Naive thymus-derived CD4-positive, alpha-beta T cell (primary cell): ENCODE measurements at regions of chr7 and their contacts with region 1.

Region 1: DNA sequence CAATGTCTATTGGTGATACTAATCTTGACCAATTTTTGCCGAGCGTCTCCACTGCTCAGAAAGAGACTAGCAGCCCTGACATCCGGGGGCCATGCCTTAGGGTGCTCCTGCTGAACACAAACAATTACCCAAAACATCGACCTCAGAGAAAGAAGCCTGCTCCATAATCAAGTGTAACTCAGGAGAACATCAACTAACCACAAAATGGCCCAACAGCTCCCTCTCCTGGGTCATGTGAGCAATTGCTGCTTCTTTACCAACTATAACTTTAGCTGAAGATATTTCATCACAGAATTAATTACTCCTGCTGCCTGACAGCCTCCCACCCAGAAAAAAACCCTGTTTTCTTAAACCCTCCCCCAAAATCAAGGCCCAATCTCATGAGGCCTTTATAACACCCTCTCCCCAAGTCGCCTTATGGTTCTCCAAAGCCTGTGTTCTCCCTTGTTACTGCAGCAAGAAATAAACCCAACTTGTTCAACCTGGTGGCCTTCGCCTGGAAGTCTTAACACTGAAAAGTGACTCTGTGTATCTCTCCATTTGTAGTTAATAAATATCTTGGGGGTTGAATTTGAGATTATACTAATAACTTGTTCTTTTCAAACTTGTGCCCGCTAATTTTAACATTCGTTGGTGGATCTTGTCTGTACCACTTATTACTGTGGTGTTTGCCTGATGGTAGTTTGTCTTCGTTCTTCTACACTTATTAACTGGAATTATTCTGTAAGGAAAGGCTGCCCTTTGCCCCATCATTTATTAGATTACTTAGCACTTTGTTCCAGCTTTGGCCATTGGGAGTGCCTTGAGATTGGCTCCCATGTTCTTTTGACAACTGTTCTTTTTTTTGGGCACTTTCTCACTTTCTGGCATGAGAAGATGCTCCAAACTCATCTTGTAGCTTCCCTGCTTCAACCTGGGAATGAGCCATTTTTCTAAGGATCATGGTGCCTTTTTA is 21.2 kb upstream of the RAMP3 start:
- DNase-seq: peak; percentile 38 to 81 (median 70)
- ATAC-seq: peak; percentile 91
- H3K4me3 ChIP-seq: no peak overlapping the region
- H3K4me3 Mint-ChIP-seq: peak overlapping the region in 1 of 10 donors; percentile 21
- H3K27ac ChIP-seq: no peak overlapping the region
- H3K27ac Mint-ChIP-seq: peak overlapping the region in 8 of 9 donors; percentile 0 to 84 (median 48)
- H3K4me1 ChIP-seq: peaks cover 0 to 3% of the 10 kb centered on the region in 2 donors
- H3K4me1 Mint-ChIP-seq: peaks cover 6 to 27% (median 10%) of the 10 kb centered on the region in 7 donors
- H3K27me3 ChIP-seq: no peaks in the 10 kb centered on the region
- H3K27me3 Mint-ChIP-seq: peaks cover 0 to 2% (median 0%) of the 10 kb centered on the region in 5 donors

Region 2: GRCh38 chr7:44581879-44582603 is 554.3 kb before region 1 on chr7 and contains the start of gene TMED4:
- CTCF ChIA-PET with region 1: no interaction called
- POLR2A ChIA-PET with region 1: no interaction called
- intact Hi-C with region 1: loop called in 1 of 2 experiments (anchors 2 kb)
- DNase-seq: peak; percentile 100
- ATAC-seq: peak; percentile 96
- H3K4me3 ChIP-seq: peak within 1 kb of the TSS; percentile 95
- H3K4me3 Mint-ChIP-seq: peak within 1 kb of the TSS; percentile 86 to 97 (median 92)
- H3K27ac ChIP-seq: peak within 1 kb of the TSS; percentile 90
- H3K27ac Mint-ChIP-seq: peak within 1 kb of the TSS; percentile 95 to 99 (median 98)
- H3K4me1 ChIP-seq: peaks cover 14 to 19% of the 10 kb centered on the region in 2 donors
- H3K4me1 Mint-ChIP-seq: peaks cover 13 to 43% (median 38%) of the 10 kb centered on the region in 7 donors
- H3K27me3 ChIP-seq: no peaks in the 10 kb centered on the region
- H3K27me3 Mint-ChIP-seq: peaks cover 0 to 12% (median 0%) of the 10 kb centered on the region in 5 donors
- total RNA-seq, gene TMED4: 70.0 to 98.5 (median 95.3) TPM

Region 3: GRCh38 chr7:44921607-44922359 is 214.6 kb before region 1 on chr7:
- CTCF ChIA-PET with region 1: interaction called, 4 read pairs
- POLR2A ChIA-PET with region 1: no interaction called
- intact Hi-C with region 1: loop called (anchors 1 to 5 kb)
- DNase-seq: peak; percentile 76 to 98 (median 86)
- ATAC-seq: peak; percentile 99
- H3K4me3 ChIP-seq: no peak overlapping the region
- H3K4me3 Mint-ChIP-seq: no peak overlapping the region
- H3K27ac ChIP-seq: no peak overlapping the region
- H3K27ac Mint-ChIP-seq: peak overlapping the region in 5 of 9 donors; percentile 6 to 78 (median 34)
- H3K4me1 ChIP-seq: peaks cover 0 to 9% of the 10 kb centered on the region in 2 donors
- H3K4me1 Mint-ChIP-seq: peaks cover 0 to 21% (median 0%) of the 10 kb centered on the region in 7 donors
- H3K27me3 ChIP-seq: no peaks in the 10 kb centered on the region
- H3K27me3 Mint-ChIP-seq: peaks cover 0 to 6% (median 0%) of the 10 kb centered on the region in 5 donors

Region 4: DNA sequence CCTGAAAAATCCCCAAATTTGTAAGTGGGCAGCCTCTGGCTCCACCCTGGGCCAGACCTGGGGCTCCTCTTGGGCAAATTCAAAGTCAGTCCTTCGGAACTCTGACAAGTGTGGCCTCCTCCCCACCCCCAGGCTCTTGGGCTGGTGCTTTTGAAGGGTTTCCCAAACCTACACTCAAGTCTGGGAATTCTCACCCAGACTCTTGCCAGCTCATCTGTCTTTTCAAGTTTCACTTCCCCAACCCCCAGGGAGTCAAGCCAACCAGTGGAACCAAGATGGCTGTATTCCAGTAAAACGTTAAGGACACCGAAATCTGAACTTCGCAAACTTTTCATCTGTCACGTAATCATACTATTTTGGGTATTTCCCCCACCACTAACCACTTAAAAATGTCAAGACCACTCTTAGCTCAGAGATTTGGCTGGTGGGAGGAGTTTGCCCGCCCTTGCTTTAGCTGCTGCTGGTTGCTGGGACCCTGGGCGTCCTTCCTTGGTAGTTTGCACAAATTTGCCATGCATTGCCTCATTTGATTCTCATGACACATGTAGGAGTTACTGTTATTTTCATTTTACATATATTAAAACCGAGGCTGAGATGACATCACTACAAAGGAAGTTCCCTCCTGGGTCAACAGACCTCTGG is 155.9 kb before region 1 on chr7:
- CTCF ChIA-PET with region 1: interaction called, 139 read pairs
- POLR2A ChIA-PET with region 1: interaction called, 4 read pairs
- intact Hi-C with region 1: loop called in 1 of 2 experiments (anchors 1 kb)
- DNase-seq: peak in 2 of 9 donors; percentile 63 to 69
- ATAC-seq: peak; percentile 38
- H3K4me3 ChIP-seq: peak overlapping the region; percentile 78
- H3K4me3 Mint-ChIP-seq: peak overlapping the region; percentile 39 to 100 (median 70)
- H3K27ac ChIP-seq: peak overlapping the region; percentile 83
- H3K27ac Mint-ChIP-seq: peak overlapping the region; percentile 85 to 99 (median 96)
- H3K4me1 ChIP-seq: peaks cover 60 to 63% of the 10 kb centered on the region in 2 donors
- H3K4me1 Mint-ChIP-seq: peaks cover 54 to 96% (median 68%) of the 10 kb centered on the region in 7 donors
- H3K27me3 ChIP-seq: no peaks in the 10 kb centered on the region
- H3K27me3 Mint-ChIP-seq: no peaks in the 10 kb centered on the region

Region 5: DNA sequence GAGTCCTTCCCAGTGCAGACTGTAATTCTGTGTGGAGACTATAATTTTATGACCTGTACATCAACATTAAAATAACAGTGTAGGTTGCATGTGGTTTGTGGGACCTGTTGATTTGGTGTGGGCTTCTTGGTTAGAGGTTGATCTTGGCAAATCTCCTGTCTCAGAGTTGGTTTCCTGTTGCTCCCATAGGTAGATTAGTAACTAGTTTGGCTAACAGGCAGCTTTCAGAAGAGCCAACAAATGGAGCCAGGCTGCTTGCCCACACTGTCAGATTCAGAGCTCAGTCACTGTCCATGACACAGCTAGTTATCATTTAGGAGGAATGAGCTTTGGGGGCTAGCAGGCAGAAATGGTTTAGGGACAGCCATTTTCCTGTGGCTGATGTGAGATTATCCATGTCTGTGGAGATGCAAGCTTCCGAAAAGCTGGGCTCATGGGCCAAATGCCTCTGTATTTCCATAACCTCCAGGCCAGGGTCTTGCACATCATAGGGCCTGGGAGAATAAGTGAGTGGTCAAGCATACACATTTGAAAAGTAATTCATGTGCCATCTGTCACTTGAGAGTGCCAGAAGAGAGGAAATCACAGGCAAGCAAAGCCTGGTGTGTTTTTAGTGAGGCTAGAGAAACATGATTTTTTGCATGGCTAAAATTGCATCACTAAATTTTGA is 103.0 kb before region 1 on chr7:
- CTCF ChIA-PET with region 1: no interaction called
- POLR2A ChIA-PET with region 1: interaction called, 3 read pairs
- intact Hi-C with region 1: loop called (anchors 1 to 5 kb)
- DNase-seq: no peak
- ATAC-seq: peak; percentile 12
- H3K4me3 ChIP-seq: peak overlapping the region; percentile 15
- H3K4me3 Mint-ChIP-seq: peak overlapping the region; percentile 76 to 93 (median 81)
- H3K27ac ChIP-seq: peak overlapping the region; percentile 43
- H3K27ac Mint-ChIP-seq: peak overlapping the region; percentile 48 to 94 (median 84)
- H3K4me1 ChIP-seq: peaks cover 67 to 81% of the 10 kb centered on the region in 2 donors
- H3K4me1 Mint-ChIP-seq: peaks cover 61 to 80% (median 75%) of the 10 kb centered on the region in 7 donors
- H3K27me3 ChIP-seq: no peaks in the 10 kb centered on the region
- H3K27me3 Mint-ChIP-seq: no peaks in the 10 kb centered on the region

Region 6: DNA sequence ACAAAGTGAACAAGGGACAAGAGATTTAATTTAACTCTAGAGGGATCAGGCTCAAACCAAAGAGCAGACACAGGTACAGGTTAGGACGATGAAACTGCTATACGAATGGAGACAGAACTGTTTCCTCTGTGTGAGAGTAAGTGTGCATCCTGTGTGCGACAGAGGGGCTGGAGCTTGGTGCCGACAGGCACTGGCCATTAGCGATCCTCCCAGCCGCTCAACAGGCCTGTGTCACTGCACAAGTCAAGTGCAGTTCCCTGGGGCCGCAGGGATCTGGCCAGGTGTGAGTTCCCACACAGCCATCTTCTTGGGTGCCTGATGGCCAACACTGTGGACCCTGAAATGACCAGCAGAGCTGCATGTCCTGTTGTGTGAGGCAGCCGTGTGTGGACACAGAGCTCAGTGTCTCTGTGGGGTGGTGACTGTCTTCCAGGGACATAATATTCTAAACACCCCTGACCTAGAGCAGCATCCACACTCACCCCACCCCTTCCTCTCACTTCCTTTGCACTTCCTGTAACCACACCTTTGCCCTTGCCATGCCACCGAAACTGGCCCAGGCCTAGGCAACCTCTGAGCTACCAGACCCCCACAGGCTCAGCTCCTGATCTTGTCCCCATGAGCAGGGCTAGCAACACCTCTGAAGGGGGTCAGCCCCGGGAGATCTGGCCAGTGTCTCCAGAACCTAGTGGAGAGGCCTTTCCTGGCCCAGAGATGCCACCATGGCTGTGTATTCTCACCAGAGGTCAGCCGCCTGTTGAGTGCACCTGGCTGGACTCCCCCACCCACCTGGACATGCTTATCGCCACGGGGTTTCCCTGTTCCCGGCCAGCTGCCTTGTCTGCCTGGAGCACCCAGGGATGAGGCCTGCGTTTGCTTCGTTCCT is 13.2 kb before region 1 on chr7:
- CTCF ChIA-PET with region 1: interaction called, 13 read pairs
- POLR2A ChIA-PET with region 1: no interaction called
- intact Hi-C with region 1: no loop called
- DNase-seq: peak in 1 of 9 donors; percentile 7
- ATAC-seq: peak; percentile 36
- H3K4me3 ChIP-seq: peak overlapping the region; percentile 28
- H3K4me3 Mint-ChIP-seq: peak overlapping the region in 9 of 10 donors; percentile 32 to 84 (median 65)
- H3K27ac ChIP-seq: peak overlapping the region; percentile 28
- H3K27ac Mint-ChIP-seq: peak overlapping the region; percentile 14 to 95 (median 75)
- H3K4me1 ChIP-seq: peaks cover 14 to 17% of the 10 kb centered on the region in 2 donors
- H3K4me1 Mint-ChIP-seq: peaks cover 8 to 20% (median 16%) of the 10 kb centered on the region in 7 donors
- H3K27me3 ChIP-seq: peaks cover 0 to 3% of the 10 kb centered on the region in 2 donors
- H3K27me3 Mint-ChIP-seq: peaks cover 0 to 5% (median 0%) of the 10 kb centered on the region in 5 donors

Region 7: DNA sequence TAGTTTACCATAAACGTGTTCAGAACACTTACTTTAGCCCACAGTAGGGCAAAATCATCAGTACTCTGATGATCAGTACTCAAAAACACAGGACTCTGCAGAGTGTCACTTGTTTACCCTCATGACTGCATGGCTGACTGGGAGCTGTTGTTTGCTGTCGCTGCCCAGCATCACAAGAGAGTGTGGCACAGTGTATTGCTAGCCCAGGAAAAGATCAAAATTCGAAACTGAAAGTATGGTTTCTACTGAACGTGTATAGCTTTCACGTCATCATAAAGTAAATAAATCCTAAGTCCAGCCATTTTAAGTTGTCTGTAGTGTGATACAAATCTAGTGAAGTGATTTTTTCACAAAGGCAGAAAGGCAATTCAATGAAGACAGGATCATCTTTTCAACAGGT is 205.9 kb after region 1 on chr7:
- CTCF ChIA-PET with region 1: no interaction called
- POLR2A ChIA-PET with region 1: no interaction called
- intact Hi-C with region 1: no loop called
- DNase-seq: no peak
- ATAC-seq: no peak
- H3K4me3 ChIP-seq: no peak overlapping the region
- H3K4me3 Mint-ChIP-seq: no peak overlapping the region
- H3K27ac ChIP-seq: no peak overlapping the region
- H3K27ac Mint-ChIP-seq: no peak overlapping the region
- H3K4me1 ChIP-seq: no peaks in the 10 kb centered on the region
- H3K4me1 Mint-ChIP-seq: peaks cover 0 to 2% (median 0%) of the 10 kb centered on the region in 7 donors
- H3K27me3 ChIP-seq: no peaks in the 10 kb centered on the region
- H3K27me3 Mint-ChIP-seq: peaks cover 14 to 35% (median 22%) of the 10 kb centered on the region in 5 donors